Cardiac septum (tissue), 1 donor: ENCODE measurements at regions of chr6 and their contacts with region 1.

Region 1: GRCh38 chr6:90216072-90216977 is 80.3 kb downstream of the BACH2 start:
- DNase-seq: no peak

Region 2: DNA sequence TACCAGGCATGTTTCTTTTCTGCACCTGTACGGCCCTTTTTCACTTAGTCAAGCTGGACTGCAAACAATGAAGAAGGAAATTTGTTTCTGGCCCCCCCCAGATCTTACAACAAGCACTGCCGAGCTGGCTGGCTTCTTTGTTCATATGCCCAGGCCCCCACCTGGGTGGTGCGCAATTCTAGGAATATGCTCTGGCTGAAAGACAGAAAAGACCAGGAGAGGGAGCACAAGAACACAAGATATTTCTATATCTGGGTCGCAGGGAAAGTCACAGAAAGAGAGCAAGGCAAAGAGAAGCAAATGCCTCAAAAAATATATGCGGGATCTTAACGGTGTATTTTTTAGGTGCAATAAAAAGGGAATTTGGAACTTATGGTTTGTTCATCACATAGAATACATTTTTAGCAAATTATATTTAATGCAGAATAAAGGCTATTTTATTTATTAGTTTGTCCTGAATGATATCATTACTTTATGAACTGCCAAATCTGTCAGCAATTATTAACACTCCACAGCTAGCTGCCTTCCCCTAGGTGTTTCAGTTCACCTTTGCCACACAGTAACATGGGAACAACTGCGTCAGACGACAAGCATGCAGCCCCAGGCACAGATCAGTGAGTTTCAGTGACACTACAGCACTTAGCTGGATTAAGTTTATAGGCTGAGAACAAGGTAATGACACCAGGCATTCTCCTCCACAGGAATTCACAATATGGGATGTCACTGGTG is 245.6 kb before region 1 on chr6:
- intact Hi-C with region 1: loop called (anchors 5 kb)
- DNase-seq: no peak

Region 3: DNA sequence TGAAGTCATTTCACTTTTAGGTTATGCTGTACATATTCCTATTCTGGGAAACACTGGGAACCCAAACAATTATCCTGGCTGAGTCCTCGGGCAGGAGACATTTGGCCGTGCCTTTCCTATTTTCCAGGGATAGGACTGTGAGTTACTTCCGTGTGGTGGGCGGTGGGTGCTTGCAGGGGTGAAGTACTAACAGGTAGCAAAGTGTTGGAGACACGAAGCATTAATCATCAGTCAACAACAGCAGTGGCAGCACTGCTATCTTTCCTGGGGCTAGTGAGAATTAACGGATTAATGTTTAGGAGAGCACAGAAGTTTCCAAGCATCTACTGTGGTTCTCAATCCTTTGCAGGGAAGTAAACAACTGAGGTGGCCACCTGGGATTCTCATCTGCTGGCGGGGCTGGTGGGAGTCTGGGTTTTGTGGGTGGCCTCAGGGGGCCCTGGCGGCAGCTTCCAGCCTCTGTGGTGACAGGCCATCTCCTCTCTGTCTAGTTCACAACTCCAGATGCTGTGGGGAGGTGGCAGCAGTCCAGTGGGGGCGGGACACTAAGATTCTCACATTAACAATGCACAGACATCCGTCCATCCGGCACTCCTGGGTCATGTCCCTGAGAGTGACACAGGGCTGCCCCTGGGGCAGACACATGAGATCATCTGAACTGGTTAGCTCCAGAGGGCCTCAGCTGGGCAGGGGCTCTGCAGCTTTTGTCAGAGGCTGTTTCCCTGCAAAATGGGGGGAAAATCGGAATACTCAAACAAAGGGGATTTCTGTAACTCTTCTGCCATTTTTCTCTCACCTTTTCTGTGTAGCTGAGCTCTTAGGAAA is 231.2 kb before region 1 on chr6:
- intact Hi-C with region 1: loop called (anchors 2 kb)
- DNase-seq: peak; percentile 92

Region 4: DNA sequence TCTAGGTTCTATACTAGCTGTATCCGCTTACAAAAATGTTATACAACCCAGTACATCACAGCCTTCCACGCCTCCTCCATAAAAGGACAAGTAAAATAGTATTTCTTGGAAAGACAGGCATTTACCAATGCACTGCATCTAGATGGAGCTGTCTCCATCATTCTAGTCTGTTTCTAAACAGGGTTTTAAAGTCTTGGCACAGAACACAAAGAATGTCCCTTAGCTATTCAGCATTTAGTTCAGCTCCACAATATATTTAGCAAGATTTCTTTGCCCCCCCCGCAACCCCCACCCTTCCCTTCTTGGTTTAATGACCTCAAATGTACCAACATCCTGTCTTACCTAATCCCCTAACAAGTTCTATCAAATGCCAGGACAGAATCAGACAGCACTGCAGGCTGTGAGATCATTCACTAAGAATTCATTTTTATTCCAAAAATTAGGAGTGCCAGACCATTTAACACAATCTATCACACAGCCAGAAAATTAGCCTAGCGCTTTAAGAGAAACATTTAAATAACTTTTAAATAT is 118.3 kb before region 1 on chr6:
- intact Hi-C with region 1: loop called (anchors 5 kb)
- DNase-seq: no peak

Region 5: GRCh38 chr6:90184334-90185298 is 31.7 kb before region 1 on chr6:
- intact Hi-C with region 1: loop called (anchors 2 kb)
- DNase-seq: no peak

Region 6: GRCh38 chr6:90285611-90286381 is 69.5 kb after region 1 on chr6:
- intact Hi-C with region 1: loop called (anchors 2 kb)
- DNase-seq: peak; percentile 92

Region 7: DNA sequence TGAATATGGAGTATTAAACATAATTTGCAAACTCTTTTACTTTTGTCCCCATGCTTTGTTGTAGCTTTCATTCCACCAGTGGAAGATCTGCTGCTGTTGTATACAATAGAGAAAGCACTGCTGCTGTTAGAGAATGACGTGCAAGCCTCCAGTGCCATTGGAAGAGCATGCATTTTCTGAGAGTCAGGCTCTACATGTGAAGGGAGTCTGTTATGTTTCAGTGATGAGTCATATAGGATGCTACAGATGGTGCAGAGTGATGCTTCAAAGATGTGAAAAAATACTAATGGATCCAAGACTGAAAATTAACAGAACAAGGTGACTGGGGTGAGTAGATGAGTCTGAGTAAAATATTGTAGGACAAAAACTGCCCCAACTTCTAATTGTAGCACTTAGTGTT is 102.7 kb after region 1 on chr6:
- intact Hi-C with region 1: no loop called
- DNase-seq: no peak

Region 8: GRCh38 chr6:90596967-90597539 is 380.7 kb after region 1 on chr6:
- intact Hi-C with region 1: no loop called
- DNase-seq: no peak